ENCODE measurements at regions of chr6 and their contacts with region 1.

Region 1: DNA sequence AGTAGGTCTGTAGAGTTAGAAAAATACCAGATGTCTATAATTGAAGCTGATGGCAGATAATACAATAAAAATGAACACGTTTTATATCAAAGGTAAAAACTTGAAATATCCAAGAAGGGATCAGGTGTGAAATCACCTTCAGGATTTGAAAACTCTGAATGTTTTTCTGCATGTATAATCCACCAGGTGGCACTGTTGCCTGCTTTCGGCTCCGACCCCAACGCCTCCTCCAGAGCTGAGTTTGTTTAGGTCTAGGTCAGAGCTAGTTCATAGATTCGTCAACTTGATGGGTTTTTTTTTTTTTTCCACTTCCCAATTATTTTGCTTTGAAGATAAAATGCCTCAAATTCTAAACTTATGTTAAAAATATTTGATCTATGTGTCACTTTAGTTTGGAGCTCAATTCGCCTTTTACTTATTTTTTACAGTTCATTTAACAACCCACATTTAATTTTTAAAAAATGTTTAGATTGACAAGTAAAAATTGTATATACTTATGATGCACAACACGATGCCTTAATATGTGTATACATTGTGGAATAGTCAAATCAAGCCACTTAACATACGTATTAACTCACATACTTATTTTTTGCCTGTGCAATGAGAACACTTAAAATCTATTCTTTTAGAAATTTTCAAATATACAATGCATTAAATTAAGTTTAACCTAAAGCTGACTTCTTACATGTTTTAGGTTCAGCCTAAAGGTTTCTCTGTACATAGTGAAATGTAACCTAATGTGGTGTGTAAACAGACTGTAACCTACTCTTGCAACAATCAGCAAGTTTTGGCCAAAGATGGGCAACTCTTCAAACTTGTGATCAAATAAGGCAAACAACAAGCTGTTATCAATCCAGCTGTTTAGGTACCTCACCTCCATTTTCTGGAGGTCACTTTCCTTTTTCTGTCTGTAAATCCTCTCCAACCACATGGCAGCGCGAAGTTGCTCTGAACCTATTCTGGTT is 39.4 kb upstream of the ENPP4 start:
- DNase-seq: no peak

Region 2: GRCh38 chr6:46203391-46204177 is 113.2 kb after region 1 on chr6:
- intact Hi-C with region 1: loop called (anchors 10 kb)
- DNase-seq: no peak

Region 3: DNA sequence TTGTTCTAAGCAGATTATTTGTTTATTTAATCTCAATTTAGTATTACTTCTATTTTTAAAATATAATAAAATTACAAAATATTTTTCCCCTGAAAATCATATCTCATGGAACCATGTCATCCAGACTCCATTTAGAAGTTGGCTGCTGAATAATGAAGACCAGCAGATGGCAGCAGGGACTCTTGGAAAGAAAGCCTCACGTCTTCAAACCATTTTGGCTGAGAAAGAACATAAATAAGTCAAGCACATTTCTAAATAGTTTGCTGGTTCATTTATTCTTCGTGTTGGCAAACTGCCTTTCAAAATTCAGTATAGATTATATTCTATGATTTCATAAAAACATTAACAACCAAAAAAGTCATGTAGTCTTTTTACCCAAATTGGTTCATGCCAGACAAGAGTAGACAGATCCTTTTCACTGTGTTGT is 329.2 kb after region 1 on chr6:
- intact Hi-C with region 1: loop called (anchors 10 kb)
- DNase-seq: no peak

Region 4: DNA sequence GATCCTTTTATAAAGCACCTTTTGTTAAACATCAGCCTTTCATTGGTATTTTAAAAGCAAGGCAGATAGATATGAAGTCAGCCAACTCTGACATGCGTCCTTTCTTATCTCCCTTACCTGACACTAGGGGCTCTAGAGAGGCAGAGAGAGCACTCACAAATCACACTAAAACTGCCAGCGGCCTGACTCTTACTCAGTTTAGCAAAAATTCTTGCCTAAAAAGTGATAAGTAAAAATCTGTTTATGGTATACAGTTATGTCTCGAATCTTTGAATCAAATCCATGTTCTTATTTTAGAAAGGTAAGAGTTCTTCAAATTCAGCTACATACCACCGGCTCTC is 586.9 kb after region 1 on chr6:
- intact Hi-C with region 1: no loop called
- DNase-seq: no peak